Right lobe of liver (tissue), 6 donors: ENCODE measurements at regions of chr3 and their contacts with region 1.

Region 1: DNA sequence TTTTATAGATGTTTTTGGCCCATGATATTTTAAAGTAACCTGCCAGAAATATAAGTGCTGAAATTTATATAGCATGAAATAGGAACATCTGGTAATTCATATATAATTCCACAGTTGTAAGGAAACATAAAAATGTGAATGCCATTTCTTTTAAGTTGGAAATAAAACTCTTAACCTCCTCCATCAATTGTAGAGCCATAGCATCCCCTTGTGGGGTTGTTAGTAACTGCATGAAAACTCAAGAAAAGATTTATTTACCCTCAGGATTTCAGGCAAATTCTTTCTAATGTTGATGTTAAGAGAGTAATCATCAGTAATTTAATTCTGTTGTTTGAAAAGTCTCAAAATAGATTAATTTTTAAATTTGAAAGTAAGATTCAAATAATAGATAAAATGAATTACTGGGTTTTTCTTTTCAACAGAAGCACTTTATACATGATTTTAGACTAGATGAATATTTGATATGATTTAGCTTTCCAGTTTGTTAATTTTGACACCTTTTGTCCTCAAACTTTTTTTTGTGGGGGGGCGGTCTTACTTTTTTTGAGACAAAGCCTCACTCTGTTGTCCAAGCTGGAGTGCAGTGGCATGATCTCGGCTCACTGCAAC is 74.7 kb downstream of the RASA2 start:
- DNase-seq: no peak
- ATAC-seq: peak; percentile 72 to 80 (median 76)
- H3K4me3 ChIP-seq: no peak overlapping the region
- H3K27ac ChIP-seq: no peak overlapping the region
- H3K4me1 ChIP-seq: no peaks in the 10 kb centered on the region
- H3K27me3 ChIP-seq: no peaks in the 10 kb centered on the region
- CTCF ChIP-seq: peak; percentile 90 to 98 (median 96)
- POLR2A ChIP-seq: no peak

Region 2: GRCh38 chr3:141460097-141460704 is 101.3 kb before region 1 on chr3:
- intact Hi-C with region 1: loop called in 1 of 2 experiments (anchors 5 kb)
- DNase-seq: peak; percentile 85 to 87 (median 86)
- ATAC-seq: peak; percentile 99
- H3K4me3 ChIP-seq: no peak overlapping the region
- H3K27ac ChIP-seq: no peak overlapping the region
- H3K4me1 ChIP-seq: no peaks in the 10 kb centered on the region
- H3K27me3 ChIP-seq: no peaks in the 10 kb centered on the region
- CTCF ChIP-seq: peak; percentile 72 to 90 (median 88)
- POLR2A ChIP-seq: no peak

Region 3: GRCh38 chr3:141477224-141477623 is 84.3 kb before region 1 on chr3:
- intact Hi-C with region 1: loop called in 1 of 2 experiments (anchors 5 kb)
- DNase-seq: no peak
- ATAC-seq: peak in 1 of 4 donors; percentile 76
- H3K4me3 ChIP-seq: no peak overlapping the region
- H3K27ac ChIP-seq: no peak overlapping the region
- H3K4me1 ChIP-seq: no peaks in the 10 kb centered on the region
- H3K27me3 ChIP-seq: no peaks in the 10 kb centered on the region
- CTCF ChIP-seq: no peak
- POLR2A ChIP-seq: no peak

Region 4: DNA sequence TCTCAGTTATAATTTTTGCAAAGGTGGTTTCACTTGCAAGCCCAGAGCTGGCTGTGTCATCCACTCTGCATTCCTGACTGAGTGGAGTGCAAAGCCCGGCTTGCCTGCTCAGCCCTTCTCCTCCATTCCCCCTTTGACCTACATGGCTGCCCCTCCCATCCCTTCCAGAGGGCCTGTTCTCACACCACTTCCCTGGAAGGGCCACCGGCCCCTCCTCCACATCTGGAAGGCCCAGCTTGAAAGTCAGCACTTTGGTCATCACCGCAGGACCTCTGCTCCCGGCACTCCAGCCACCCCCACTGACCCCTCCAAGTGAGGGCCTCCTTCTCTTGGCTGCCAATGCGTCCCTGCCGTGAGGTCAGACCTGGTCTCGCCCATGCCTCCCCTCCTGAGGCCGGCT is 102.5 kb after region 1 on chr3:
- intact Hi-C with region 1: no loop called
- DNase-seq: no peak
- ATAC-seq: no peak
- H3K4me3 ChIP-seq: no peak overlapping the region
- H3K27ac ChIP-seq: no peak overlapping the region
- H3K4me1 ChIP-seq: no peaks in the 10 kb centered on the region
- H3K27me3 ChIP-seq: no peaks in the 10 kb centered on the region
- CTCF ChIP-seq: no peak
- POLR2A ChIP-seq: no peak